ENCODE measurements at regions of chr22 and their contacts with region 1.

Region 1: DNA sequence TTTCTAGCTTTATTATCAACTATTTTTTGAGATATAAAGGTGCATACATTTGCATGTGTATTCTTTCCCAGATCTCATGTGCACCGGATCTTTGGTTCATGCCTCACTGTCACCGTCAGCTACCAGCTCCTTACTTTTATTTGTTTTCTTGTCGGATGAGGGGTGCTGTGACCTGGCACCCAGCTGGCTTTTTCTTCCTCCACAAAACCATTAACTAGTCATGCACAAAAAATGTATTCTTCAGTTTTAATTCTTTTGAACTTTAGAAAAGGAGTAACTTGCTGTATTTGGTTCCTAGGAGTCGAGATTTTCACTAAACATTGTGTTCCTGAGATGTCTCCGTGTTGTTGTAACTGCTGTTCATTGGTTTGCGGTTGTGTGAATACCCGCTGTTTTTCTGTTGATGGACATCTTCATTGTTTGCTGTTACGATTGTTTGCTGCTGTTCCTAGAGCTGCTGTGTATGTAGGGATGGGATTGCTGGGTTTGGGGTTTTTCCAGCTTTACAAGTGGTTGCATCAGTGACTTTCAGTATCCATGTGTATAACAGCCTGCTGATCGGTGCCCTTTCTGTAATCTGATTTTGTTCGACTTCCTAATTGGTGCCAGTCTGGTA is 39.4 kb downstream of the MOV10L1 start:
- DNase-seq: no peak
- ATAC-seq: no peak
- H3K4me3 ChIP-seq: no peak overlapping the region
- H3K27ac ChIP-seq: no peak overlapping the region
- H3K4me1 ChIP-seq: no peaks in the 10 kb centered on the region
- H3K27me3 ChIP-seq: no peaks in the 10 kb centered on the region; a peak in 3 of 4 replicates
- CTCF ChIP-seq: no peak
- EP300 ChIP-seq: no peak
- POLR2A ChIP-seq: no peak
- RAD21 ChIP-seq: no peak

Region 2: DNA sequence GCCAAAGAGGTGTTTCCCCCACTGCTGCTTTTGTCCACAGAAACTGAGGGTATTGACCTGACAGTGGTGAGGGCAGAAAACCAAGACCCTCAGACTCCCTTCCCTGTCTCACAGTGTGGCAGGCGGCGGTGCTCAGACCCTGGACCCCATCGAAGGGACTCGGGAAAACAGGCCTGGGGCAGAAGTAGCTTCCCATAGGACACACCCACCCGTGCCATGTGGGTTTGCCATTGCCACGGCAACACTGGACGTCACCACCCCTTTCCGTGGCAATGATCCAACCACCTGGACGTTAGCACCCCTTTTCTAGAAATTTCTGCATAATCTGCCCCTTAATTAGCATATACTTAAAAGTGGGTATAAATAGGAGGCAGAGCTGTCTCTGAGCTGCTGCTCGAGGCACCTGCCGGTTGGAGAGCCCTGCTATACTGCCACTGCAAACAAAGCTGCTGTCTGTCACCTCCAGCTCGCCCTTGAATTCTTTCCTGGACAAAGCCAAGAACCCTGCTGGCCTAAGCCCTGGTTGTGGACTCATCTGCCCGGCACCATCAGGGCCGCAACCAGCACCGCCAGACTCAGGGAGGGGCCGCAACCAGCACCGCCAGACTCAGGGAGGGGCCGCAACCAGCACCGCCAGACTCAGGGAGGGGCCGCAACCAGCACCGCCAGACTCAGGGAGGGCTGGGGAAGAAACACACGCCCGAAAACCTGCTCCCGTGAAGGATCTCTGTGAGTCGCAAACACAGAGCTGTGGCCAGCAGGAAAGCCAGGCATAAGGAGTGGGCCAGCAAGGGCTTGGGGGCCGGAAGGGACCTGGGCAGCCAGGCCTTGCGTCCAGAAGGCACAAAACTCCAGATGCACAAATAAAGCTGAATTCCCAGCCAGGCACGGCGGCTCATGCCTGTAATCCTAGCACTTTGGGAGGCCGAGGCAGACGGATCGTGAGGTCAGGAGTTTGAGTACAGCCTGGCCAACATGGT is 54.4 kb before region 1 on chr22:
- CTCF ChIA-PET with region 1: no interaction called
- POLR2A ChIA-PET with region 1: no interaction called
- RAD21 ChIA-PET with region 1: no interaction called
- SMC1A ChIA-PET with region 1: no interaction called
- in situ Hi-C with region 1: loop called (anchors 5 kb)
- intact Hi-C with region 1: no loop called
- DNase-seq: no peak
- ATAC-seq: no peak
- H3K4me3 ChIP-seq: no peak overlapping the region
- H3K27ac ChIP-seq: no peak overlapping the region
- H3K4me1 ChIP-seq: no peaks in the 10 kb centered on the region
- H3K27me3 ChIP-seq: no peaks in the 10 kb centered on the region; a peak in 2 of 4 replicates
- CTCF ChIP-seq: no peak
- EP300 ChIP-seq: no peak
- POLR2A ChIP-seq: no peak
- RAD21 ChIP-seq: no peak

Region 3: GRCh38 chr22:50260801-50261614 is 131.8 kb after region 1 on chr22:
- CTCF ChIA-PET with region 1: no interaction called
- POLR2A ChIA-PET with region 1: no interaction called
- RAD21 ChIA-PET with region 1: no interaction called
- SMC1A ChIA-PET with region 1: no interaction called
- in situ Hi-C with region 1: no loop called
- intact Hi-C with region 1: no loop called
- DNase-seq: no peak
- ATAC-seq: peak; percentile 66
- H3K4me3 ChIP-seq: peak overlapping the region; percentile 89
- H3K27ac ChIP-seq: peak overlapping the region; percentile 52
- H3K4me1 ChIP-seq: peaks cover 14% of the 10 kb centered on the region
- H3K27me3 ChIP-seq: no peaks in the 10 kb centered on the region
- CTCF ChIP-seq: no peak
- EP300 ChIP-seq: no peak
- POLR2A ChIP-seq: peak; percentile 74
- RAD21 ChIP-seq: no peak